ENCODE measurements at regions of chr4 and their contacts with region 1.

Region 1: GRCh38 chr4:13548984-13549546 is 4.8 kb upstream of the NKX3-2 start:
- DNase-seq: peak; percentile 61 to 73 (median 71)
- H3K4me3 ChIP-seq: peak overlapping the region in 1 of 3 experiments; percentile 64
- H3K4me3 Mint-ChIP-seq: peak overlapping the region; percentile 54 to 81
- H3K27ac ChIP-seq: no peak overlapping the region
- H3K27ac Mint-ChIP-seq: no peak overlapping the region
- H3K4me1 ChIP-seq: peaks cover 28 to 33% of the 10 kb centered on the region in 2 donors
- H3K4me1 Mint-ChIP-seq: peaks cover 28% of the 10 kb centered on the region
- H3K27me3 ChIP-seq: peaks cover 58 to 78% of the 10 kb centered on the region in 2 donors
- H3K27me3 Mint-ChIP-seq: peaks cover 64 to 83% (median 79%) of the 10 kb centered on the region in 3 donors
- CTCF ChIP-seq: peak; percentile 95

Region 2: DNA sequence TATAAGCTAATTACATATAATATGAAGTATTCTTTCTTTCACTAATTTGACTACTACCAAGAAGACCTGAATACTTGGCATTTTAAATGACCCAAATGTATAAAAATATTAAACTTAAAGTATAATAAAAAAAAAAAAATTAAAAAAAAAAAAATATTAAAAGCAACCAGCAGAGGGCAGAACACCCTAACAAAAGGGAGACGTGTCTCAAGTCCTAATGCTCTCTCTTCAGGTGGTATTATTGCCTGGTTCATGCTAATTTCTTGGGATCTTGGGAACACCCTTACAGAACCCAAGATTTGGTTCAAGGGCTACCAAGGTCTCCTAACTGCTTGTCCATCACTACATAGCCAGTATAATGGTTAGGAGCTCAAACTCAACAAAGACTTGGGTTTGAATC is 819.7 kb before region 1 on chr4:
- intact Hi-C with region 1: loop called (anchors 2 to 5 kb)
- DNase-seq: peak in 1 of 3 donors; percentile 7
- H3K4me3 ChIP-seq: no peak overlapping the region
- H3K4me3 Mint-ChIP-seq: no peak overlapping the region
- H3K27ac ChIP-seq: no peak overlapping the region
- H3K27ac Mint-ChIP-seq: no peak overlapping the region
- H3K4me1 ChIP-seq: no peaks in the 10 kb centered on the region
- H3K4me1 Mint-ChIP-seq: no peaks in the 10 kb centered on the region
- H3K27me3 ChIP-seq: no peaks in the 10 kb centered on the region
- H3K27me3 Mint-ChIP-seq: peaks cover 1 to 5% (median 4%) of the 10 kb centered on the region in 3 donors
- CTCF ChIP-seq: peak; percentile 62

Region 3: DNA sequence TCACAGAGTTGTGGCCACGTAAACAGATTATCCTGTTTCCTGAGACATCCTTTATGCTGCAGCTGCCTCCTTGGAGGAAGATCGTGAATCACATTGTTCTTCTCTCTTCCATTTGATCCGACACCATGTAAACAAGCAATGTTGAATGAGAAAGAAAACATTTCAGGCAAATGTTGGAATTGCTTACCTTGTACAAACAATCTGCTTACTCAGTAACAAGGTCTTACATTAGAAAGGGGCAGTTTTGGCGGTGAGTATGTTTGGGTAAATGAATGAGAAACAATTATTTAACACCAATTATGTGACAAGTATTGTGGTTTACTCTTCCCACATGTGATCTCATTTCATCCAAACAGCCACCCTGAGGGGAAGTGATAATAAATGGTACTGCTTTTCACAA is 702.7 kb before region 1 on chr4:
- intact Hi-C with region 1: loop called in 1 of 2 experiments (anchors 10 kb)
- DNase-seq: no peak
- H3K4me3 ChIP-seq: no peak overlapping the region
- H3K4me3 Mint-ChIP-seq: peak overlapping the region in 1 of 2 donors; percentile 16
- H3K27ac ChIP-seq: no peak overlapping the region
- H3K27ac Mint-ChIP-seq: no peak overlapping the region
- H3K4me1 ChIP-seq: no peaks in the 10 kb centered on the region
- H3K4me1 Mint-ChIP-seq: no peaks in the 10 kb centered on the region
- H3K27me3 ChIP-seq: peaks cover 0 to 2% of the 10 kb centered on the region in 2 donors
- H3K27me3 Mint-ChIP-seq: peaks cover 0 to 12% (median 0%) of the 10 kb centered on the region in 3 donors
- CTCF ChIP-seq: no peak

Region 4: GRCh38 chr4:14225747-14226146 is 676.7 kb after region 1 on chr4:
- intact Hi-C with region 1: no loop called
- DNase-seq: no peak
- H3K4me3 ChIP-seq: no peak overlapping the region
- H3K4me3 Mint-ChIP-seq: no peak overlapping the region
- H3K27ac ChIP-seq: no peak overlapping the region
- H3K27ac Mint-ChIP-seq: no peak overlapping the region
- H3K4me1 ChIP-seq: no peaks in the 10 kb centered on the region
- H3K4me1 Mint-ChIP-seq: no peaks in the 10 kb centered on the region
- H3K27me3 ChIP-seq: no peaks in the 10 kb centered on the region
- H3K27me3 Mint-ChIP-seq: peaks cover 0 to 4% (median 0%) of the 10 kb centered on the region in 3 donors
- CTCF ChIP-seq: no peak

Region 5: GRCh38 chr4:15368856-15369255 is 1819.8 kb after region 1 on chr4:
- intact Hi-C with region 1: no loop called
- DNase-seq: peak in 1 of 3 donors; percentile 33
- H3K4me3 ChIP-seq: no peak overlapping the region
- H3K4me3 Mint-ChIP-seq: peak overlapping the region in 1 of 2 donors; percentile 0
- H3K27ac ChIP-seq: no peak overlapping the region
- H3K27ac Mint-ChIP-seq: peak overlapping the region in 1 of 7 donors; percentile 3
- H3K4me1 ChIP-seq: peaks cover 5 to 12% of the 10 kb centered on the region in 2 donors
- H3K4me1 Mint-ChIP-seq: peaks cover 27% of the 10 kb centered on the region
- H3K27me3 ChIP-seq: no peaks in the 10 kb centered on the region
- H3K27me3 Mint-ChIP-seq: peaks cover 0 to 3% (median 2%) of the 10 kb centered on the region in 3 donors
- CTCF ChIP-seq: no peak

Measured in CD14-positive monocyte (primary cell).